Activated B cell treated with CpG ODN at 0.5 μM for 24 hours (primary cell): ENCODE measurements at regions of chr12 and their contacts with region 1.

Region 1: DNA sequence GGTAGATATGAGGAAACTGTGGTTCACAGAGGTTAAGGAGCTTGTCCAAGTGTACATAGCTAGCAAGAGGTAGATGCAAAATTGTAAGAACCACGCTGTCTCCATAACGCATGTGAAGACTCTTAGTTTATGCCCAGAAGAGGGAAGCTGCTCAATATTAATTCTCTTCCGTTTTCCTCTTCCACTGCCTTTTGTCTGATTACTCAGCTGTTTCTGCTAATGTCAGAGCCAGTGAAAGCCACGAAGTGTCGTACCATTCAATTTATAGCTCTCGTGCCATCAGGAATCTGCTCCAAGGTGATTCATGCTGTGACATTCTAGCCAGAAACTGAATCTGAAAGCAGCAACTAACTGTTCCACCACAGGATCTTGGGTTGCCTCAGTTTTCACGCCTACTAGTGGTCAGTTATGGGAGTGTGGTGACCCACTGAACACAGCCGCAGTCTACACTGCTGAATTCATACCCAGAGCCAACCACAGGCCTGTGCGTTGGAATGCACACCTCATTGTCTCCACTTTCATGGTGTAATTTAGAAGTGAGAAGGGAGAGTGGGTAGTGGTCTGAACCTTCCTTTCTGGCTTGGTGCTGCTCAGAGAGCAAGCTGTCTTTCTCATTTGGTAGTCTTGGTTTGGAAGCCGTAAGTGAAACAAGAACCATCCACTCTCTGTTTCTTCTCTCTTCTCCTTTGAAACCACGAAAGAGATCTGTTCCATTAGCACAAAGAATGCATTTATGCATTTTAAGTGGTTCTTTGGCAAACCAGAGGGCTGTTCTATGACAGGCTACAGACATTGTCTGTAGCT is 74.2 kb upstream of the NAP1L1 start:
- DNase-seq: peak; percentile 33
- ATAC-seq: peak; percentile 99
- H3K4me3 Mint-ChIP-seq: peak overlapping the region; percentile 82
- H3K27ac Mint-ChIP-seq: peak overlapping the region; percentile 88
- H3K4me1 Mint-ChIP-seq: peaks cover 20% of the 10 kb centered on the region
- H3K27me3 Mint-ChIP-seq: no peaks in the 10 kb centered on the region
- CTCF ChIP-seq: no peak

Region 2: DNA sequence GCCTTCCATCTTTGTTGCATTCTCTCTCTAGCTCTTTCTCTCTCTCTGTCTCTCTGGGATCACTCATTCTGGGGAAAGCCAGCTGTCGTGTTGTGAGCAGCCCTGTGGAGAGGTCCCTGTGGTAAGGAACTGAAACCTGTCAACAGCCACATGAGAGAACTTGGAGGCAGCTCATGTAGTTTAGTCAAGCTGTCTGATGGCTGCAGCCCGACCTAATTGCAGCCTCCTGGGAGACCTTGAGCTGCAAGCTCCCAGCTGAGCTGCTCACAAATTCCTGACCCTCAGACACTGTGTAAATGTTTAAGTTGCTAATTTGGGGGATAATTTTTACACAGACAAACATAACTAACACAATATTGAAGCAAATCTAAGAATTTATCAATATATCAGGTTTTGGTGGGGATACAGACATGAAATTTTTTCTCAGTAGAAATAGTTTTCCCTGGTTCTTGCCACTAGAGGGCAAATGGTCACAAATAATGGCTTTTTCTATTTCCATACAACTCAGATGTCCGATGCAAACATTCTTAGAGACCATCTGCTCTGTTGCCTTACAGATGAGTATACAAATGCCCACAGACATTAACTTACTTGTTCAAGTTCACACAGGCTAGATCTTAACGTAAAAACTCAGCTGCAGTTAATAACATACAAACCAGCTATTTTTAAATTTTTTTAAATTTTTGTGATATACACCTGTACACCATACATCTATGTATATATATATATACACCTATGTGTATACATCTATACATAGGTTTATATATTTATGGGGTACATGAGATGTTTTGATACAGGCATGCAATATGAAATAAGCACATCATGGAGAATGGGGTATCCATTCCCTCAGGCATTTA is 631.8 kb before region 1 on chr12:
- CTCF ChIA-PET with region 1: no interaction called
- POLR2A ChIA-PET with region 1: no interaction called
- intact Hi-C with region 1: loop called (anchors 2 kb)
- DNase-seq: no peak
- ATAC-seq: peak; percentile 74
- H3K4me3 Mint-ChIP-seq: no peak overlapping the region
- H3K27ac Mint-ChIP-seq: no peak overlapping the region
- H3K4me1 Mint-ChIP-seq: peaks cover 6% of the 10 kb centered on the region
- H3K27me3 Mint-ChIP-seq: peaks cover 31% of the 10 kb centered on the region
- CTCF ChIP-seq: no peak

Region 3: DNA sequence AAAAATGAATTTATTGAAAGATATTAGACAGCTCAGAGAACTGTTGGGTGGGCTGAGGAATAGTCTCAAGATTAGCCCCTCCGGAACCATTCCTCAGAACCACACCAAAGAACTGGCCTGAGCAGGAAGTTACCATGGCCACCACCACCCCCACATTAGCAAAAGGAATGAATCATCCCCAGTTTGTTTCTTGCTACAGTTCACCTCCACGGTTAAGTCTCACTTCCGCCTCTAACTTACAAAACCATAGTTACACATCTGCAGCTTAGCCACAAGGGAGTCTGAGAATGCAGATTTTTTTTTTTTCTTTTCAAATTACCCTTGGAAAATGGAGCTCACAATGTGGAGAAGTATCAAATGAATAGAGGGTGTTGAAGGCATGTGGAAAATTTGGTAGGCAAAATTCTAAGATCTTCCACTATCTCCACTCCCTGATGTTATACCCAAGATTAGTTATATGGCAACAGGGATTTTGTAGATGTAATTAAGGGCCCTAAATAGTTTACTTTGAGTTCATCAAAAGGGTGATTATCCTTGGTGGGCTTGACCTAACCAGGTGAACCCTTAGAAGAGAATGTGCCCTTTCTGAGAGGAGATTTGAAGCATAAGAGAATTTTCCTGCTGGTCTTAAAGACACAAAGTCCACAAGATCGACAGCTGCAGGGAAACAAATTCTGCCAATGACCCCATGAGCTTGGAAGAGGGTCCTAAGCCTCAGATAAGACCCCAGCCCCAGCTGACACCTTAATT is 517.5 kb before region 1 on chr12:
- CTCF ChIA-PET with region 1: no interaction called
- POLR2A ChIA-PET with region 1: no interaction called
- intact Hi-C with region 1: loop called (anchors 10 kb)
- DNase-seq: no peak
- ATAC-seq: peak; percentile 96
- H3K4me3 Mint-ChIP-seq: peak overlapping the region; percentile 26
- H3K27ac Mint-ChIP-seq: peak overlapping the region; percentile 51
- H3K4me1 Mint-ChIP-seq: peaks cover 33% of the 10 kb centered on the region
- H3K27me3 Mint-ChIP-seq: peaks cover under 1% of the 10 kb centered on the region
- CTCF ChIP-seq: no peak

Region 4: GRCh38 chr12:76123451-76124212 is 35.1 kb before region 1 on chr12:
- CTCF ChIA-PET with region 1: no interaction called
- POLR2A ChIA-PET with region 1: no interaction called
- intact Hi-C with region 1: no loop called
- DNase-seq: no peak
- ATAC-seq: no peak
- H3K4me3 Mint-ChIP-seq: no peak overlapping the region
- H3K27ac Mint-ChIP-seq: no peak overlapping the region
- H3K4me1 Mint-ChIP-seq: no peaks in the 10 kb centered on the region
- H3K27me3 Mint-ChIP-seq: no peaks in the 10 kb centered on the region
- CTCF ChIP-seq: no peak

Region 5: GRCh38 chr12:76176940-76177339 is 18.2 kb after region 1 on chr12:
- CTCF ChIA-PET with region 1: interaction called, 3 read pairs
- POLR2A ChIA-PET with region 1: no interaction called
- intact Hi-C with region 1: loop called (anchors 2 kb)
- DNase-seq: no peak
- ATAC-seq: no peak
- H3K4me3 Mint-ChIP-seq: no peak overlapping the region
- H3K27ac Mint-ChIP-seq: no peak overlapping the region
- H3K4me1 Mint-ChIP-seq: peaks cover 21% of the 10 kb centered on the region
- H3K27me3 Mint-ChIP-seq: no peaks in the 10 kb centered on the region
- CTCF ChIP-seq: no peak